Naive thymus-derived CD4-positive, alpha-beta T cell (primary cell): ENCODE measurements at regions of chr1 and their contacts with region 1.

Region 1: GRCh38 chr1:174883409-174883808 is 116.3 kb upstream of the CACYBP start:
- DNase-seq: peak in 3 of 9 donors; percentile 9 to 35 (median 27)
- ATAC-seq: peak; percentile 44
- H3K4me3 ChIP-seq: no peak overlapping the region
- H3K4me3 Mint-ChIP-seq: no peak overlapping the region
- H3K27ac ChIP-seq: no peak overlapping the region
- H3K27ac Mint-ChIP-seq: peak overlapping the region in 2 of 9 donors; percentile 22 to 46
- H3K4me1 ChIP-seq: no peaks in the 10 kb centered on the region
- H3K4me1 Mint-ChIP-seq: peaks cover 0 to 9% (median 4%) of the 10 kb centered on the region in 7 donors
- H3K27me3 ChIP-seq: no peaks in the 10 kb centered on the region
- H3K27me3 Mint-ChIP-seq: no peaks in the 10 kb centered on the region

Region 2: DNA sequence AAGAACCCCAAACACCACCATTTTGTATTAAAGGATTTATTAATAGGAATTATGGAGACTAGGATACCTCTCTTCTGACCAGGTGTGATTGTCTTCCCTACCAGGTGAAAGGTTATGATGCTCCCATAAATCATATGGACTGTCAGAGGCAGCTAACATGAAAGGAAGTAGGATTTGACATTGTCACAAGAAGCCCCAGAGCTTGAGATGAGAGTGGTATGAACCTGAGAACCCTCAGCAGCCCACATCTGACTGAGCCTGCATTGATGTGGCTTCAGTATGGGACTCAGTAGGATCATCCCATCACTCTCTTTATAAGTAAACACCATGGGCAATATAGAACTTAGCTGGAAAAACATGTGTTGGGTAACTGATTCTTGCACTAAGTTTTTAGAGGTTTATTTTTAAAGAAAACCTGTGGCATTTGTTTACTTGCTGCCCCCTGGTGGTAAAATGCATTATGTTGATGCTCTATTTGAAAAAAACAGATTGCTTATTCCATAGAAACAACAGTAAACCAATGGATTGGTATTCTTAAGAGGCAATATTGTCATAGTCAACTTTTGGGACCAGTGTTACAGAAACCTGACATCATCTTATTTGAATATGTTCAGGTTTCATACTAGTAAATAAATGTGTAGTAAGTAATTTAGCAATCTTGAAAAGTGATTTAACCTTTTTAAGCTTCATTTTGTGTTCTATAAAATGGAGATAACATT is 99.7 kb after region 1 on chr1:
- CTCF ChIA-PET with region 1: interaction called, 8 read pairs
- POLR2A ChIA-PET with region 1: interaction called, 3 read pairs
- intact Hi-C with region 1: loop called (anchors 1 kb)
- DNase-seq: peak in 7 of 9 donors; percentile 50 to 69 (median 58)
- ATAC-seq: peak; percentile 41
- H3K4me3 ChIP-seq: no peak overlapping the region
- H3K4me3 Mint-ChIP-seq: no peak overlapping the region
- H3K27ac ChIP-seq: no peak overlapping the region
- H3K27ac Mint-ChIP-seq: peak overlapping the region in 7 of 9 donors; percentile 19 to 91 (median 48)
- H3K4me1 ChIP-seq: peaks cover 0 to 9% of the 10 kb centered on the region in 2 donors
- H3K4me1 Mint-ChIP-seq: peaks cover 9 to 54% (median 40%) of the 10 kb centered on the region in 7 donors
- H3K27me3 ChIP-seq: no peaks in the 10 kb centered on the region
- H3K27me3 Mint-ChIP-seq: no peaks in the 10 kb centered on the region